CD8-positive, alpha-beta T cell (primary cell): ENCODE measurements at regions of chr17 and their contacts with region 1.

Region 1: GRCh38 chr17:65561394-65562205 is at the start of gene AXIN2:
- DNase-seq: peak; percentile 72 to 92 (median 87)
- ATAC-seq: peak; percentile 79
- H3K4me3 ChIP-seq: peak within 1 kb of the TSS; percentile 59 to 62
- H3K4me3 Mint-ChIP-seq: peak within 1 kb of the TSS; percentile 85
- H3K27ac ChIP-seq: peak within 1 kb of the TSS; percentile 69 to 73
- H3K27ac Mint-ChIP-seq: peak within 1 kb of the TSS; percentile 90
- H3K4me1 ChIP-seq: peaks cover 42% of the 10 kb centered on the region
- H3K4me1 Mint-ChIP-seq: peaks cover 29% of the 10 kb centered on the region
- H3K27me3 ChIP-seq: no peaks in the 10 kb centered on the region
- H3K27me3 Mint-ChIP-seq: no peaks in the 10 kb centered on the region
- CTCF ChIP-seq: no peak
- total RNA-seq, gene AXIN2: 15.8 to 20.9 TPM

Region 2: GRCh38 chr17:65593855-65594845 is 32.5 kb after region 1 on chr17:
- CTCF ChIA-PET with region 1: interaction called, 3 read pairs
- POLR2A ChIA-PET with region 1: no interaction called
- intact Hi-C with region 1: loop called in 1 of 2 experiments (anchors 2 kb)
- DNase-seq: peak in 2 of 9 experiments; percentile 14 to 21
- ATAC-seq: no peak
- H3K4me3 ChIP-seq: peak overlapping the region in 1 of 2 experiments; percentile 21
- H3K4me3 Mint-ChIP-seq: peak overlapping the region; percentile 80
- H3K27ac ChIP-seq: no peak overlapping the region
- H3K27ac Mint-ChIP-seq: no peak overlapping the region
- H3K4me1 ChIP-seq: peaks cover 31% of the 10 kb centered on the region
- H3K4me1 Mint-ChIP-seq: peaks cover 29% of the 10 kb centered on the region
- H3K27me3 ChIP-seq: no peaks in the 10 kb centered on the region
- H3K27me3 Mint-ChIP-seq: no peaks in the 10 kb centered on the region
- CTCF ChIP-seq: no peak

Region 3: GRCh38 chr17:65644545-65644944 is 82.9 kb after region 1 on chr17:
- CTCF ChIA-PET with region 1: no interaction called
- POLR2A ChIA-PET with region 1: no interaction called
- intact Hi-C with region 1: no loop called
- DNase-seq: no peak
- ATAC-seq: no peak
- H3K4me3 ChIP-seq: no peak overlapping the region
- H3K4me3 Mint-ChIP-seq: no peak overlapping the region
- H3K27ac ChIP-seq: no peak overlapping the region
- H3K27ac Mint-ChIP-seq: no peak overlapping the region
- H3K4me1 ChIP-seq: no peaks in the 10 kb centered on the region
- H3K4me1 Mint-ChIP-seq: no peaks in the 10 kb centered on the region
- H3K27me3 ChIP-seq: no peaks in the 10 kb centered on the region
- H3K27me3 Mint-ChIP-seq: no peaks in the 10 kb centered on the region
- CTCF ChIP-seq: no peak

Region 4: GRCh38 chr17:65742403-65743307 is 181.1 kb after region 1 on chr17:
- CTCF ChIA-PET with region 1: interaction called, 3 read pairs
- POLR2A ChIA-PET with region 1: no interaction called
- intact Hi-C with region 1: loop called in 1 of 2 experiments (anchors 10 kb)
- DNase-seq: peak in 1 of 9 experiments; percentile 18
- ATAC-seq: no peak
- H3K4me3 ChIP-seq: no peak overlapping the region
- H3K4me3 Mint-ChIP-seq: peak overlapping the region; percentile 43
- H3K27ac ChIP-seq: no peak overlapping the region
- H3K27ac Mint-ChIP-seq: no peak overlapping the region
- H3K4me1 ChIP-seq: peaks cover 21% of the 10 kb centered on the region
- H3K4me1 Mint-ChIP-seq: peaks cover 23% of the 10 kb centered on the region
- H3K27me3 ChIP-seq: no peaks in the 10 kb centered on the region
- H3K27me3 Mint-ChIP-seq: no peaks in the 10 kb centered on the region
- CTCF ChIP-seq: no peak

Region 5: GRCh38 chr17:66191593-66192382 is 630.2 kb after region 1 on chr17 and contains the start of gene CEP112:
- CTCF ChIA-PET with region 1: no interaction called
- POLR2A ChIA-PET with region 1: no interaction called
- intact Hi-C with region 1: loop called (anchors 2 to 10 kb)
- DNase-seq: peak; percentile 84 to 99 (median 92)
- ATAC-seq: peak; percentile 86
- H3K4me3 ChIP-seq: peak within 1 kb of the TSS; percentile 58 to 76
- H3K4me3 Mint-ChIP-seq: peak within 1 kb of the TSS; percentile 84
- H3K27ac ChIP-seq: peak within 1 kb of the TSS; percentile 58 to 76
- H3K27ac Mint-ChIP-seq: peak within 1 kb of the TSS; percentile 83
- H3K4me1 ChIP-seq: peaks cover 14% of the 10 kb centered on the region
- H3K4me1 Mint-ChIP-seq: peaks cover 15% of the 10 kb centered on the region
- H3K27me3 ChIP-seq: no peaks in the 10 kb centered on the region
- H3K27me3 Mint-ChIP-seq: no peaks in the 10 kb centered on the region
- CTCF ChIP-seq: no peak
- total RNA-seq, gene CEP112: 0.28 to 1.5 TPM